CD4-positive, alpha-beta T cell (primary cell): ENCODE measurements at regions of chr3 and their contacts with region 1.

Region 1: GRCh38 chr3:129016356-129016719 is 15.2 kb downstream of the EFCC1 start:
- DNase-seq: peak; percentile 42 to 88 (median 64)
- ATAC-seq: peak; percentile 86
- H3K4me3 ChIP-seq: peak overlapping the region; percentile 37
- H3K4me3 Mint-ChIP-seq: peak overlapping the region; percentile 89
- H3K27ac ChIP-seq: peak overlapping the region; percentile 79 to 82
- H3K27ac Mint-ChIP-seq: peak overlapping the region; percentile 80
- H3K4me1 ChIP-seq: peaks cover 46% of the 10 kb centered on the region
- H3K4me1 Mint-ChIP-seq: peaks cover 45% of the 10 kb centered on the region
- H3K27me3 ChIP-seq: no peaks in the 10 kb centered on the region
- H3K27me3 Mint-ChIP-seq: no peaks in the 10 kb centered on the region
- CTCF ChIP-seq: peak; percentile 26

Region 2: DNA sequence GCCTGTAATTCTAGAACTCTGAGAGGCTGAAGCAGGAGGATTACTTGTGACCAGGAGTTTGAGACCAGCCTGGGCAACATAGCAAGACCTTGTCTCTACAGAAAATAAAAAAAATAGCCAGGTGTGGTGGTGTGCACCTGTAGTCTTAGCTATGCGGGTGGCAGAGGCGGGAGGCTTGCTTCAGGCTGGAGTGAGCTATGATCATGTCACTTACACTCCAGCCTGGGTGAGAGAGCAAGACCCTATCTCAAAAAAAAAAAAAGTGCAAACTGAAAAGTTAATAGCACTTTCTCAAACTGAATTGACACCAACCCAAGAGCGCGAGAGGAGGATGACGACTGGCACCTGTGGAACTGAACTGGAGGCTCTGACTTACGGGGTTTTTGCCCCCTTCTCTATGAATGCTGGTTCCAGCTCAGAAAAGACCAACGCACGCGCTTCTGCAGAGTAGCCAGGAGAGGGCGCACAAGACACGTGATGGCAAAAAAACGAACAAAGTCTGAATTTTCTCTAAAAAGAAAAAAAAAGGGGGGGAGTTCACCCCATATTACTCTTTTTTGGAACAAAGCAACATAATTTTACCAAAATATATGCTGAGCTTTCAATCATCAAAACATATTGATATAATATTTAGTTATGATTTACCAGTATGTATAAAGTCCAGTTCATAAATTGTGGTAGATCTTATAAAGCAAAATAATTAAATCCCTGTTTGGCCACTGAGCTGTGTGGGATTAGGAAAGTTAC is 46.2 kb before region 1 on chr3:
- CTCF ChIA-PET with region 1: interaction called, 47 read pairs
- POLR2A ChIA-PET with region 1: interaction called, 38 read pairs
- intact Hi-C with region 1: loop called (anchors 1 kb)
- DNase-seq: peak; percentile 44 to 85 (median 57)
- ATAC-seq: peak; percentile 80
- H3K4me3 ChIP-seq: no peak overlapping the region
- H3K4me3 Mint-ChIP-seq: no peak overlapping the region
- H3K27ac ChIP-seq: no peak overlapping the region
- H3K27ac Mint-ChIP-seq: no peak overlapping the region
- H3K4me1 ChIP-seq: peaks cover 5% of the 10 kb centered on the region
- H3K4me1 Mint-ChIP-seq: peaks cover 11% of the 10 kb centered on the region
- H3K27me3 ChIP-seq: no peaks in the 10 kb centered on the region
- H3K27me3 Mint-ChIP-seq: no peaks in the 10 kb centered on the region
- CTCF ChIP-seq: peak; percentile 97

Region 3: GRCh38 chr3:129003578-129004160 is 12.7 kb before region 1 on chr3:
- CTCF ChIA-PET with region 1: interaction called, 28 read pairs
- POLR2A ChIA-PET with region 1: interaction called, 78 read pairs
- intact Hi-C with region 1: loop called in 1 of 2 experiments (anchors 2 kb)
- DNase-seq: peak; percentile 17 to 85 (median 55)
- ATAC-seq: peak; percentile 90
- H3K4me3 ChIP-seq: peak overlapping the region; percentile 14
- H3K4me3 Mint-ChIP-seq: no peak overlapping the region
- H3K27ac ChIP-seq: no peak overlapping the region
- H3K27ac Mint-ChIP-seq: no peak overlapping the region
- H3K4me1 ChIP-seq: peaks cover 51% of the 10 kb centered on the region
- H3K4me1 Mint-ChIP-seq: peaks cover 48% of the 10 kb centered on the region
- H3K27me3 ChIP-seq: peaks cover 24 to 35% of the 10 kb centered on the region in 2 experiments
- H3K27me3 Mint-ChIP-seq: peaks cover 26% of the 10 kb centered on the region
- CTCF ChIP-seq: no peak

Region 4: GRCh38 chr3:129046037-129046731 is 29.8 kb after region 1 on chr3:
- CTCF ChIA-PET with region 1: interaction called, 11 read pairs
- POLR2A ChIA-PET with region 1: interaction called, 11 read pairs
- intact Hi-C with region 1: no loop called
- DNase-seq: peak in 4 of 14 experiments; percentile 20 to 39 (median 32)
- ATAC-seq: peak; percentile 67
- H3K4me3 ChIP-seq: peak overlapping the region; percentile 35
- H3K4me3 Mint-ChIP-seq: no peak overlapping the region
- H3K27ac ChIP-seq: no peak overlapping the region
- H3K27ac Mint-ChIP-seq: no peak overlapping the region
- H3K4me1 ChIP-seq: peaks cover 9% of the 10 kb centered on the region
- H3K4me1 Mint-ChIP-seq: no peaks in the 10 kb centered on the region
- H3K27me3 ChIP-seq: no peaks in the 10 kb centered on the region
- H3K27me3 Mint-ChIP-seq: peaks cover 12% of the 10 kb centered on the region
- CTCF ChIP-seq: peak; percentile 40

Region 5: GRCh38 chr3:129160891-129161859 is 144.8 kb after region 1 on chr3 and contains the start of gene ISY1:
- CTCF ChIA-PET with region 1: interaction called, 3 read pairs
- POLR2A ChIA-PET with region 1: interaction called, 16 read pairs
- intact Hi-C with region 1: no loop called
- DNase-seq: peak; percentile 70 to 97 (median 84)
- ATAC-seq: peak; percentile 74
- H3K4me3 ChIP-seq: peak within 1 kb of the TSS; percentile 82
- H3K4me3 Mint-ChIP-seq: peak within 1 kb of the TSS; percentile 96
- H3K27ac ChIP-seq: peak within 1 kb of the TSS; percentile 92 to 99
- H3K27ac Mint-ChIP-seq: peak within 1 kb of the TSS; percentile 95
- H3K4me1 ChIP-seq: peaks cover 24% of the 10 kb centered on the region
- H3K4me1 Mint-ChIP-seq: peaks cover 55% of the 10 kb centered on the region
- H3K27me3 ChIP-seq: no peaks in the 10 kb centered on the region
- H3K27me3 Mint-ChIP-seq: no peaks in the 10 kb centered on the region
- CTCF ChIP-seq: peak; percentile 76
- total RNA-seq, gene ISY1: 28.2 to 28.5 TPM